ENCODE measurements at regions of chr19 and their contacts with region 1.

Region 1: DNA sequence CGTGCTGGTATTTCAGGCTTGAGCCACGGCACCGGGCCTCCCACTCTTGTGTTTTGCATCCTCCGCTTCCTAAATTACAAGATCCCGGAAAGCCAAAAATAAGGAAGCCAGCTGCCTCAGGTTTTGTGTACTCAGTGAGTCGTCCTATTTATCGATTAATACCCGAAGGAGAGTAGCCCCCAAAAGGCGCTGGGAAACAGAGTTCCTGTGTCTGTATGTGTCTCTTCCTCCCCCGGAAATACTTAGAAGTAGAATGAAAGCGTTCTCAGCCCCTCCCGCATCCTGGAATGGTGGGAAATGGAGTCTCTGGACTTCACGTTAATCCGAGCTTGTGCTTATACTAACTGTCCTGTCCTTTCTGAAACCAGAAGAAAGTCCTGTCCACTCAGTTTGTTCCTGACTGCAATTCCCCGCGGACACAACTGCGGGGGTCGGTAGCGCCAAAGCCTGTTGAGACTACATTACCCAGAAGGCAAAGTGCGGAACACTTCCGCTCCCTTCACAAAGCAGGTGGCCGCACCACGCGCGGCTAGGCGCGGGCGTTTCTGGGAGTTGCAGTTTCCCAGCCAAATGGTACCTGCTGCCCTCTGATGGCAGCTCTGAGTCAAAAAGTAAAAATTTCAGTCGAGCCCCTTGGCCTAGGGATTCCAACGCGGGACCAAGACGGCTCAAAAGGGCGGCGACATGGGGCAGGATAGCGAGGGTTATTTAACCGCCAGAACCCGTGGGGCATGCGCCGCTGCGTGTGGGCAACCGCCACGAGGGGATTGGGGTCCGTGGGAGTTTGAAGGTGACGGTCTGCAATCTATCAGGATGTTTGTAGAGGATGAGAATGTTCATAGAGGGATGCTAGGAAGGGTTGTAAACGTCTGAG is 2.2 kb upstream of the GSK3A start:
- H3K4me3 ChIP-seq: peak overlapping the region; percentile 38
- H3K27ac ChIP-seq: peak overlapping the region; percentile 99
- H3K4me1 ChIP-seq: peaks cover 18% of the 10 kb centered on the region
- CTCF ChIP-seq: peak; percentile 95

Region 2: GRCh38 chr19:42219812-42220750 is 24.5 kb before region 1 on chr19 and contains the start of gene ZNF526:
- CTCF ChIA-PET with region 1: interaction called, 16 read pairs
- POLR2A ChIA-PET with region 1: interaction called, 67 read pairs
- H3K4me3 ChIP-seq: peak within 1 kb of the TSS; percentile 87
- H3K27ac ChIP-seq: peak within 1 kb of the TSS; percentile 89
- H3K4me1 ChIP-seq: peaks cover 23% of the 10 kb centered on the region
- CTCF ChIP-seq: peak; percentile 93

Region 3: DNA sequence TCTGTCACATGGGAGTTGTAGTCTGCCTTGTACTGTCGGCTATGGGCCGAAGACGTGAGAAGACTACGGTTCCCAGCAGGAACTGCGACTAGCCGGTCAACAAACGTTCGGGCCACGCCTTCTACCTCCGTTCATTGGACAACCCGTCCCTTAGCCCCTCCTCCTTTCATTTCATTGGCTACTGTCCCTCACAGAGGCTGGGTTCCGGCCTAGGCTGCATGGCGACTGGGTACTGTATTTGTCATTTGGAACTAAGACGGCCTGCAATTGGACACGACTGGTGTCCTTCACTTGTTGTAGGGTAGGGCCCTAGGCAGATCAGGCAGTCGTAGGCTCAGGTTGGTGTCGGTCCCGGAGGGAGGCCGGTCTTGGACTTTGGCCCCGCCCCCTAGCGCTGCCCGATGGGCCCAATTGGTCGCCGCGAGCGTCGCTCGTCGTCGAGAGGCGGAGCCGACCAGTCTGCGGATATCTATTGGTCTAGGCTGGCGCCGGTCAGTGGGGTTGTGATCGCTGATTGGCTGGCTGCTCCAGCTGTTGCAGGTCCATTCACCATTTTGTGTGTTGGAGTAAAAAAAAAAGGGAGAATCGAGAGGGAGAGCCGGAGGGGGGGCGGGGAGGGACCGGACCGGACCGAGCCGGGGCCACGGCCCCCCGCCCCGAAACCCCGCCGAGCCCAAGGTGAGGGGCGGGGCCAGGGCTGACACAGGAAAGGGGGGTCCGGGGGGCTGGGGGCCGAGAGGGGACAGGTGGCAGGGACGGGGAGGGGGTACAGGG is 24.3 kb after region 1 on chr19 and contains the start of gene CIC:
- CTCF ChIA-PET with region 1: interaction called, 10 read pairs
- POLR2A ChIA-PET with region 1: interaction called, 242 read pairs
- H3K4me3 ChIP-seq: peak within 1 kb of the TSS; percentile 77
- H3K27ac ChIP-seq: peak within 1 kb of the TSS; percentile 98
- H3K4me1 ChIP-seq: peaks cover 16% of the 10 kb centered on the region
- CTCF ChIP-seq: no peak

Region 4: GRCh38 chr19:42295831-42296525 is 51.4 kb after region 1 on chr19:
- CTCF ChIA-PET with region 1: interaction called, 55 read pairs
- POLR2A ChIA-PET with region 1: interaction called, 31 read pairs
- H3K4me3 ChIP-seq: no peak overlapping the region
- H3K27ac ChIP-seq: no peak overlapping the region
- H3K4me1 ChIP-seq: no peaks in the 10 kb centered on the region
- CTCF ChIP-seq: peak; percentile 95

Region 5: DNA sequence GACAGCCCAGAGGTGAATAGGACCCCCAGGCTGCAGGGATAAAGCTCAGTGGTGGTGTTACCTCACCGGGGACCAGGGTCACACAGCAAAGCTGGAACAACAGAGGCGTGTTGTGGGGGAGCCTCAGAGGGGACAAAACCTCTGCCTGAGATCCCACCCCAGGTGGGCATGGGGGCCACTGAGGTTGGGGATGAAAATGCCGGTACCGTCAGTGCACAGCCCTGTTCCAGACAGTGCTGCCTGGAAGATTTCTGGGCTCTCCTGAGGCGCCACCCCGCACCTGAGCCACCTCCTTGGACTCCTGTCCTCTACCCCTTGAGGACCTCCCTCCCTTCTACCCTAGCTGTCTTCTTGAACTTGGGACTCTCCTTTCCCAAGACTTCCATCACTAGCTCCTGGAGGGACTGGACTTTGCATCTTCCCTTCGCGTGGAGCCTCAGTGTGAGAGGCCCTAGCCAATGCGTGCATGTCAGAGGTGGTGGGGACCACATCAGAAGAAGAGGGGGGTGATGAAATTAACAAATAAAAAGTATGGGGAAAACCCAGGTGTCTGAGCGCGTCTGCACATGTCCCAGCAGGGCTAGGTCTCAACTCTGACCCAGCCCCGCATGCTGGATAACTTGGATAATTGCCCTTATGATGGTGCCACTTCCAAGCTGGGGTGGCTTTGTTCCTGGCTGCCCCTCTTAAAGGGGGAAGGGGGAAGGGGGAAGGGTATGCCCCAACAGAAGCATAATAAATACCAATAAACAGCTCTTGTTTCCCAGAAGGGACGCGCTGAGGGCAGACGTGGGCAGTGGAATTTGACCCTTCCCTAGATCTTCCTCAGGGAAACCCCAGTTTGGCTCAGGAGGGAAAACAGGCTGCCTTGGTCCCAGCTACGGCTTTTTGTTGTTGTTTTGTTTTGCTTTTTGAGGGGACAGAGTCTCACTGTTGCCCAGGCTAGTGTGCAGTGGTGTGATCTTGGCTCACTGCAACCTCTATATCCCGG is 133.9 kb after region 1 on chr19:
- CTCF ChIA-PET with region 1: no interaction called
- POLR2A ChIA-PET with region 1: interaction called, 11 read pairs
- H3K4me3 ChIP-seq: no peak overlapping the region
- H3K27ac ChIP-seq: no peak overlapping the region
- H3K4me1 ChIP-seq: no peaks in the 10 kb centered on the region
- CTCF ChIP-seq: no peak